ENCODE measurements at regions of chr12 and their contacts with region 1.

Region 1: DNA sequence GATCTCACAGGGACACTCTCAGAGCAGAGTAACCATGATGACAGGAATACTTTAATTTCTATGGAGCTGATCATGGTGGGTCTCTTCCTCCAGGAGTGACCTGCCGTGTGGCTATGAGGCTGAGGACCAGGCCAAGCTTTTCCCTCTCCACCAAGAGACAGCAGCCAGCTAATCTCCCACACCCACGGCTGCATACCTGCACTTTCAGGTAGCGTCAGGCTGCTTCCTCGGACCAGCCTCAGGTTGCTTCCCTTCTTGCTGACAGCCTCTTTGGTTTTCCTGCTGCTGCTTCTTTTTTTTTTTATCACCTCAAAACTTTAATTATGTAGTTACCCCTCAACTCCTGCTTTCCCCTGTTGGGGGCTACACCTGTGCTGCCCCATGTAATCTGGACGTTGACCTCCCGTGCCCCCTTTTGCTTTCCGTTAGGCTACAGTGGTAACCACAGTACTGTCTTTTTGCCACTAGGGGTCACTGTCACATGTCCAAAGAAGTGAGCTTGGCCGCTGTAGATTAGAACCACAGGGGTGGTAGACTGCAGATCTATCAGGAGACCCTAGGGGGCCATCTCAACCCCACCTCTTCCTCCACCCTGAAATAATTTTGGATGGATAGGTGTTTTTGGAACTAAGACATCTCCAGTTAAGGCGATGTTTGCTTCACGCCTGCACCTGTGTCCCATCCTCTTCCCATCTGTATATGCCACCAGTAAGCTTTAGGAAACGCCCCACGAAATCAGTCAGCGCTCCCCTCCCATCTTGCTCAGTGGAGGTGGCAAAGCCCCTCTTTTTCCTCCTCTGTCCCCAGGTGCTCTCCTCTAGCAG is 7.8 kb upstream of the PIP4K2C start:
- DNase-seq: peak; percentile 67
- H3K4me3 ChIP-seq: no peak overlapping the region
- H3K27ac ChIP-seq: no peak overlapping the region
- H3K27me3 ChIP-seq: peaks cover 22% of the 10 kb centered on the region
- CTCF ChIP-seq: peak; percentile 89

Region 2: GRCh38 chr12:57604992-57605810 is 22.0 kb after region 1 on chr12:
- CTCF ChIA-PET with region 1: interaction called, 17 read pairs
- POLR2A ChIA-PET with region 1: interaction called, 3 read pairs
- DNase-seq: no peak
- H3K4me3 ChIP-seq: peak overlapping the region; percentile 75
- H3K27ac ChIP-seq: peak overlapping the region; percentile 31
- H3K27me3 ChIP-seq: no peaks in the 10 kb centered on the region
- CTCF ChIP-seq: no peak

Region 3: DNA sequence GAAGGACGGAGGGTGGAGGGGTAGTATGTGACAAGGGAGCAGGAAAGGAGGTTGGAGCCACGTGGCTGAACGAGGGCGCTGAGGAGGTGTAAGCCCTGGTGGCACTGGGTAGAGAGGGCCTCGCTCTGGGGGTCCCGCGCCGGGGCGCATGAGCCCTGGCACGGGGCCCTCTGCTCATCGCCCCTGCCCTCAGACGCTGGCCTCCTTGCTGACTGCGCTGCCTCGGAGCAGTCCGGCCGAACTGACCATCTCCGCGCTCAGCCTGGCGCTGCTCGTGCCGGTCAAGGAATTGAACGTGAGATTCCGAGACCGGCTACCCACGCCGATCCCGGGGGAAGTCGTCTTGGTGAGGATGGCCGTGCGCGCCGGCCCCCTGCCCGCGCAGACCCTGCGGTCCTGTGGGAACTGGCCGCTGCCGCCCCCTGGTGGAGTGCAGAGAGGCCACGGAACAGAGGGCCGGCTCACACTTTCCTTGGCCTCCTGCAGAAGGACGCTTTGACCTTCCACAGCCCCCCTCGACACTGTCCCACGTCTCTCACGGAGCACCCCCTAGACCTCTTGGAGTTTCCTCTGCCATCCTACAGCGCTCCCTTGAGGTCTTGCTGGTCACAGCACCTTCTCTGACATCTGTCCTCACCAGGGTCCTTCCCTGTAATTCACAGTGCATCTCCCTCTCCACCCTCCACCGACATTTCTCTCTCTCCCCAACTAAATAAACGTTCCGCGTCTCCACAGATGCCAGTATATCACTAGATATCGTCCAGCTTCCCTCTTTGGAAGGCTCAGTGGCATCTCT is 38.5 kb after region 1 on chr12:
- CTCF ChIA-PET with region 1: interaction called, 112 read pairs
- POLR2A ChIA-PET with region 1: interaction called, 3 read pairs
- DNase-seq: no peak
- H3K4me3 ChIP-seq: peak overlapping the region; percentile 51
- H3K27ac ChIP-seq: no peak overlapping the region
- H3K27me3 ChIP-seq: peaks cover 47% of the 10 kb centered on the region
- CTCF ChIP-seq: peak; percentile 92

Region 4: DNA sequence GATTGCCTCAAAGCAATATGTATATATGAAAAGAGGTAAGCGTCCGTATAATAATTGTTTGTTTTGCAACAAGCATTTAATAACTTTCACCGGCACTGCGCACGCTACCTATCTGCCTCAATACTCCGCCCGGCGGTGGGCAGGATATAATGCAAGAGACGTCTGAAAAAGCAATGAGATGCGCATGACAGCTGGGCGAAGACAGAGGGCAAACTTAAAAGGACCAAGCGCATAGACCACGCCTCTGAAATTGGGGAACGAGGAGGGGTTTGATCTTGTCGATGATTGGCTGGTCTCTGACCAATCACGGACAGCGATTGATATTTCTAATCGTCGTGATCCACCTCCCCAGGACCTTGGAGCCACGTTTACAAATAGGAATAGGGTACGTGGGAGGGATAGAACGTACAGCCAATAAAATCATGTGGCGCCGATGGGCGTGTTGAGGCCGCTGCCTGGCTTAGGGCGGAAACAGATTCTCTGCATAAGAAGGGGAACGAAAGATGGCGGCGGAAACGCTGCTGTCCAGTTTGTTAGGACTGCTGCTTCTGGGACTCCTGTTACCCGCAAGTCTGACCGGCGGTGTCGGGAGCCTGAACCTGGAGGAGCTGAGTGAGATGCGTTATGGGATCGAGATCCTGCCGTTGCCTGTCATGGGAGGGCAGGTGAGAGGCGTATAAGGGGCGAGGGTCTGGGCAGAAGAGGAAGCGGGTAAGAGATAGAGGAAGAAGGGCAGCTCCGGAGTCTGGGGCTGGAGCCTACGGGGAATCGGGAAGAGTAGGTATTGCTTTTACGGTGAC is 110.6 kb after region 1 on chr12 and contains the start of gene OS9:
- CTCF ChIA-PET with region 1: interaction called, 38 read pairs
- POLR2A ChIA-PET with region 1: no interaction called
- DNase-seq: peak; percentile 99
- H3K4me3 ChIP-seq: peak within 1 kb of the TSS; percentile 99
- H3K27ac ChIP-seq: peak within 1 kb of the TSS; percentile 68
- H3K27me3 ChIP-seq: no peaks in the 10 kb centered on the region
- CTCF ChIP-seq: peak; percentile 85
- polyA plus RNA-seq, gene OS9: 309 and 310 TPM in 2 replicates